Caco-2 (cell line): ENCODE measurements at regions of chr2 and their contacts with region 1.

Region 1: DNA sequence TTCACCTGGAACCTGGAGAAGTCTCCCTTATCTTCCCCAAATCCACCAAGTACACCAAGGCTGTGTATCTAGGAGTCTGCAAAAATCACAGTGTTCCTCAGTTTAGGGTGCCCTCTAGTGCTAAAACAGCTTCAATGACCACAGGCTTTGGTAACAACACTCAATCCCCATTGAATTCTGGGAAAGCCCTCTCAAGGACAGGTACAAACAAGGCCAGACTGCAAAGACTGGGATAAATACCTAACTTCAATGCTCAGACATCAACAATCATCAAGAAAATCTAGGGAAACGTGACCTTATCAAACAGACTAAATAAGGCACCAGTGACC is 149.0 kb upstream of the SRD5A2 start:
- DNase-seq: peak in 1 of 2 experiments; percentile 42
- H3K4me3 ChIP-seq: no peak overlapping the region
- H3K4me3 Mint-ChIP-seq: no peak overlapping the region
- H3K27ac Mint-ChIP-seq: no peak overlapping the region
- H3K4me1 ChIP-seq: no peaks in the 10 kb centered on the region
- H3K4me1 Mint-ChIP-seq: no peaks in the 10 kb centered on the region
- H3K27me3 ChIP-seq: no peaks in the 10 kb centered on the region
- H3K27me3 Mint-ChIP-seq: peaks cover 3% of the 10 kb centered on the region
- CTCF ChIP-seq: peak in 1 of 2 experiments; percentile 64

Region 2: DNA sequence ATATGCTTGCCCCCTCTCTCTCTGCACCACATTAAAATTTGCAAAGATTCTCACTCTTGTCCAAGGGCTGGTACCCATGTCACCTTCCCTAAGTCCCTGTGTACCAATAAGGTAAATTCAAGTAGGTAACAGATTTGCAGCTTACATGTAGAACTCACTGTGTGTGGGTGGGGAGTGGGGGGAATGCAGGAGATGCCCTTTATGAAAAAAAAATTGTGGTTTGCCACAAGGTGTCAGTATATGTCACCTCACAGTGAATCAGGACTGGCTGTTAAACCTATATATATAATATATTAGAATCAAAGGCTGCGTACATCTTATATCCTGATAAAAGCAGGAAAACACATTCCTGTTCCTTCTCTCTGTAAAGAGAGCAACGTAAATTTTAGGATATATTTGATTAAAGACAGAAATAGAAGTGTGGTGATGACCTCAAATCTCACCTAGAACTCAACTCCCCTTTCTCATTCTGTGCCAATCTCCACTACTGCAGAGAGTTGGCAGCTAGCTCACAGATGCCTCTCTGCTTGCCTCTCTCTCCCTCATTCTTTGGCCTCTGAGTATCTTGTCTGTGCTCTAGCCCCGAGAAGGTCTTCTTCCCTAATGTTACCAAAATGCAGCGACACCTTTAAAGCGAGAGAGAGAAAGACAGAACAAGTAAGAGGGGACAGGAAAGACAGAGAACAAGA is 315.7 kb before region 1 on chr2:
- CTCF ChIA-PET with region 1: no interaction called
- POLR2A ChIA-PET with region 1: no interaction called
- intact Hi-C with region 1: loop called (anchors 1 kb)
- DNase-seq: peak in 1 of 2 experiments; percentile 28
- H3K4me3 ChIP-seq: no peak overlapping the region
- H3K4me3 Mint-ChIP-seq: no peak overlapping the region
- H3K27ac Mint-ChIP-seq: no peak overlapping the region
- H3K4me1 ChIP-seq: no peaks in the 10 kb centered on the region
- H3K4me1 Mint-ChIP-seq: no peaks in the 10 kb centered on the region
- H3K27me3 ChIP-seq: no peaks in the 10 kb centered on the region
- H3K27me3 Mint-ChIP-seq: no peaks in the 10 kb centered on the region
- CTCF ChIP-seq: peak; percentile 26 to 55

Region 3: GRCh38 chr2:31675485-31675901 is 54.2 kb before region 1 on chr2:
- CTCF ChIA-PET with region 1: interaction called, 4 read pairs
- POLR2A ChIA-PET with region 1: no interaction called
- intact Hi-C with region 1: loop called (anchors 1 kb)
- DNase-seq: peak; percentile 49 to 57
- H3K4me3 ChIP-seq: no peak overlapping the region
- H3K4me3 Mint-ChIP-seq: no peak overlapping the region
- H3K27ac Mint-ChIP-seq: no peak overlapping the region
- H3K4me1 ChIP-seq: no peaks in the 10 kb centered on the region
- H3K4me1 Mint-ChIP-seq: no peaks in the 10 kb centered on the region
- H3K27me3 ChIP-seq: no peaks in the 10 kb centered on the region
- H3K27me3 Mint-ChIP-seq: peaks cover 6% of the 10 kb centered on the region
- CTCF ChIP-seq: peak; percentile 20

Region 4: GRCh38 chr2:31704561-31705212 is 25.0 kb before region 1 on chr2:
- CTCF ChIA-PET with region 1: no interaction called
- POLR2A ChIA-PET with region 1: no interaction called
- intact Hi-C with region 1: no loop called
- DNase-seq: no peak
- H3K4me3 ChIP-seq: no peak overlapping the region
- H3K4me3 Mint-ChIP-seq: no peak overlapping the region
- H3K27ac Mint-ChIP-seq: no peak overlapping the region
- H3K4me1 ChIP-seq: no peaks in the 10 kb centered on the region
- H3K4me1 Mint-ChIP-seq: no peaks in the 10 kb centered on the region
- H3K27me3 ChIP-seq: no peaks in the 10 kb centered on the region
- H3K27me3 Mint-ChIP-seq: no peaks in the 10 kb centered on the region
- CTCF ChIP-seq: no peak

Region 5: DNA sequence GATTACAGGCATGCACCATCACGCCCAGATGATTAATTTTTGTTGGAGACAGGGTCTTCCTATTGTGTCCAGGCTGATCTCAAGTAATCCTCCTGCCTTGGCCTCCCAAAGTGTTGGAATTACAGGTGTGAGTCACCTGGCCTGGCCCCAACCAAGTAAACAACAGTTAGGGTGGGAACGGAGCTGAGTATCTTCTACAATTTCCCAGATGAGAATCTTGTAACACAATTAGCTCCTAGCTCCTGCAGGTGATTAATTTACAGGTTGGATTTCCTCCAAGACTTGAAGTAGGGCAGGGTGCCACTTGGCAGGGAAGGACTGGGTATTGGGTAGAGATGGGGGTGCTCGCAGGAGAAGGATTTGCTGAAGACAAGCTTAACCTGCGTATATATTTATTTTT is 517.2 kb after region 1 on chr2:
- CTCF ChIA-PET with region 1: no interaction called
- POLR2A ChIA-PET with region 1: no interaction called
- intact Hi-C with region 1: no loop called
- DNase-seq: no peak
- H3K4me3 ChIP-seq: no peak overlapping the region
- H3K4me3 Mint-ChIP-seq: no peak overlapping the region
- H3K27ac Mint-ChIP-seq: no peak overlapping the region
- H3K4me1 ChIP-seq: no peaks in the 10 kb centered on the region
- H3K4me1 Mint-ChIP-seq: peaks cover 8% of the 10 kb centered on the region
- H3K27me3 ChIP-seq: no peaks in the 10 kb centered on the region
- H3K27me3 Mint-ChIP-seq: no peaks in the 10 kb centered on the region
- CTCF ChIP-seq: no peak